Left cardiac atrium (tissue), 4 donors: ENCODE measurements at regions of chr20 and their contacts with region 1.

Region 1: GRCh38 chr20:63973636-63974402 is 4.1 kb upstream of the ZNF512B start:
- DNase-seq: peak; percentile 92
- ATAC-seq: peak; percentile 82 to 85

Region 2: DNA sequence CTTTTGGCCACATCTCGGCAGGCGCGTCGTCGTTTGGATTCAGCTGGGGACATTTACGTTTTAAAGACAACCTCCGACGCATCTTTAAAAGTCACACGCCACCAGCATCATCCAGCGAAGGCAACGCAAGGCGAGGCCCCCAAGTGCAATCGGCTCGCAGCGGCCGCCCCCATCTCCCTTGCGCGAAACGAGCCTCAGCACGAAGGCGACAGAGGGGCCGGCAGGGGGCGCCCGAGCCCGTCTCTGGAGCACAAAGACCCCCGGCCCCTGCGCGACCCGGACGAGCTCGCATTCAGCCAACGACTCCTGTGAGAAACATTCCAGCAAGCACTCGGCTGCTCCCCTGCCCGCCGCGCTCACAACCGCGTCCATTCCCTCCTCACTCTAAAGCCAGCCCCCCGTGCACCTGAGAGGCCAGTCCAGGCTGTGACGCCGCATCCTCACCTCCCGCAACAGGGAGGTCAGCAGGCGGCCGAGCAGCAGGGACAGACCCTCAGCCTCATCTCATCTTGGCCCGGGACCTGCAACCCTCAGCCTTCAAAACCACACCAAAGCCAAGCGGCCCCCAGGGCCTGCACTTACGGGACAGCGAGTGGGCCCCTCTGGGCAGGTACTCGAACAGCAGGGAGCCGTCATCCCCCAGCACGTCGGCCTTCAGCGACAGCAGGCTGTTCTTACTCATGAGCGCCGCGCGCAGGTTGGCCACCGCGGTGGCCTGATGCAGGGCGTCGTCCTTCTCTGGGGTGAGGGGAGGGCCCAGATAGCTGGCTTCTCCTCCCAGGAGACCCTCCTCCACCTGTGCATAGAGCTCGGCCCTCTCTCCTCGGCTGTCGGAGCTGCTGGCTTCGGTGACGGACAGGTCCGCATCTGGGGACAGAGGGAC is 198.5 kb before region 1 on chr20:
- intact Hi-C with region 1: loop called in 1 of 2 experiments (anchors 5 kb)
- DNase-seq: peak; percentile 67
- ATAC-seq: peak; percentile 65 to 79

Region 3: DNA sequence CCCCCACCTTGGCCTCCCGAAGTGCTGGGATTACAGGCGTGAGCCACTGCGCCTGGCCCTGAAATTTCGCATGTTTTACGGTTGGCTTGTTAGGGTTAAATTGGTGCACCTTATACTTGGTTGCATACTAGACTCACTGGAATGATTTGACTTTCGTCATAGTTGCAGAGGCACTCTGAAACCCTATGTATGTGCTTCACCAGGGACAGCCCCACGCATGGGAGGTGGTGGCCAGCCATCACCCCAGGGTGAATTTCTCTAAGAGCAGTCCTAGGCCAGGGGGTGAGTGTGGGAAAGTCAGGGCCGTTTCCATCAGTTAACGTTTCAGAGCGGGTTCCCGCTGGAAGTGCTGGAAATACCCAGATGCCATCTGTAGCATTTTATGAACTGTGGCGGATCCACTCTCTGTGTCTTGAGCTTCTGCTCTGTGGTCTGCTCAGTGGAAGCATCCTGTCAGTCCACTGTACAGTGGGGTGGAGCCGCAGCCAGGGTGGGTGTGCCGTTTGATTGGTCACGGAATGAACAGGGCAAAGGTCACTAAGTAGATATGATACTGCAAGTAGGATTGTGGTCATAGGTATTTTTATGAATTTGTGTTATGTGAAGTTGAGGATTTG is 65.7 kb before region 1 on chr20:
- intact Hi-C with region 1: loop called (anchors 5 kb)
- DNase-seq: no peak
- ATAC-seq: peak in 1 of 2 donors; percentile 21

Region 4: DNA sequence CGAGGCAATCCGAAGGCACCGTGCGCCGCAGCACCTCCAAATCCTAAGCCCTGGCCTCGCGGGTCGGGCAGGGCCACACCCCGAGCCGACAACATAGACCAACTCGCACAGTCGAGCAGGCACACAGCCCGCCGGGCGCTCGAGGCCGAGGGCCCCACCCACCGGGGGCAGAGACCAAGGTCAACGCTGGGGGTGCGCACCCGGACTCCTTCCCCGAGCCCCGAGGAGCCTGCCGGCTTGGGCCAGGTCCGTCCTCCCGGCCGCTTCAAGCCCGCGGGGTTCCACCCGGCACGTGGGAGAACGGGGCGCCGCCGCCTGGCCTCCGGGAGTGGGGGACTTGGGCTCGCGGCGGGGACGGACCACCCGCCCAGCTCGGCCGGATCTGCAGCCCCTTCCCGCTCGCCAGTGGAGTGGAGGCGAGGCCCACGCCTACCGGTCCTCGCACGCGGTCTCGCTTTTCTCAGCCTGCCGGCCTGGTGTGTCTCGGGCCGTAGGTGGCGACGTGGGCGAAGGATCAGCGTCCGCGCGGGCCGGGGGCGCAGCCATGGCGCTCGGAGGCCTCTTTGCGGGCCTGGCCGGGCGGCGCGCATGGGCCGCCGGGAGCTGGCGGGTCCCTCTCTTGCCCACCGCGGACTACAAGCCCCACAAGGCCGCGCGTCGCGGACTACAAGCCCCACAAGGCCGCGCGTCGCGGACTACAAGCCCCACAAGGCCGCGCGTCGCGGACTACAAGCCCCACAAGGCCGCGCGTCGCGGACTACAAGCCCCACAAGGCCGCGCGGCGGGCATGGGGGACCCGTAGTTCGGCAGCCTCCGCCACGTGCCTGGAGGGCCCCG is 17.8 kb before region 1 on chr20 and contains the start of gene UCKL1:
- intact Hi-C with region 1: no loop called
- DNase-seq: peak; percentile 95
- ATAC-seq: peak; percentile 86 to 88
- total RNA-seq, gene UCKL1: 30.8 to 32.4 TPM